ENCODE measurements at regions of chr6 and their contacts with region 1.

Region 1: DNA sequence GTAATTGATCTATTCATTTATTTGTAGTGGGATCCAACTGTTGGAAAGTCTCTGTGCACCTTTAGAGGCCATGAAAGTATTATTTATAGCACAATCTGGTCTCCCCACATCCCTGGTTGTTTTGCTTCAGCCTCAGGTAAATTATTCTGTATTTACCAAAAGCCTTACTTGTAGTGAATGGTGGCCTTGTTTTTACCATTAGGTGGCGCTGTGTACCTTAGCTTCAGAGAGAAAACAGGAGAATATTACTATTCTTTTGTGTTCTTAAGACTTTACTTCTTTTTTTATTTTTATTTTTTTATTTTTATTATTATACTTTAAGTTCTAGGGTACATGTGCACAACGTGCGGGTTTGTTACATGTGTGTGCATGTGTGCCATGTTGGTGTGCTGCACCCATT is 23.7 kb downstream of the PEX7 start:
- DNase-seq: peak; percentile 46
- H3K4me3 ChIP-seq: no peak overlapping the region
- H3K27ac ChIP-seq: no peak overlapping the region; a peak in 1 of 4 replicates
- H3K4me1 ChIP-seq: no peaks in the 10 kb centered on the region; a peak in 2 of 4 replicates
- H3K27me3 ChIP-seq: no peaks in the 10 kb centered on the region
- CTCF ChIP-seq: peak; percentile 71
- EP300 ChIP-seq: no peak
- RAD21 ChIP-seq: peak; percentile 79

Region 2: GRCh38 chr6:136761227-136761922 is 84.7 kb before region 1 on chr6:
- CTCF ChIA-PET with region 1: no interaction called
- POLR2A ChIA-PET with region 1: no interaction called
- DNase-seq: peak; percentile 39
- H3K4me3 ChIP-seq: peak overlapping the region in 1 of 2 experiments; percentile 18; a peak in 2 of 4 replicates
- H3K27ac ChIP-seq: peak overlapping the region; percentile 64 to 76
- H3K4me1 ChIP-seq: peaks cover 8 to 16% of the 10 kb centered on the region in 2 experiments; a peak in 3 of 4 replicates
- H3K27me3 ChIP-seq: no peaks in the 10 kb centered on the region
- CTCF ChIP-seq: no peak
- EP300 ChIP-seq: no peak
- RAD21 ChIP-seq: no peak

Region 3: DNA sequence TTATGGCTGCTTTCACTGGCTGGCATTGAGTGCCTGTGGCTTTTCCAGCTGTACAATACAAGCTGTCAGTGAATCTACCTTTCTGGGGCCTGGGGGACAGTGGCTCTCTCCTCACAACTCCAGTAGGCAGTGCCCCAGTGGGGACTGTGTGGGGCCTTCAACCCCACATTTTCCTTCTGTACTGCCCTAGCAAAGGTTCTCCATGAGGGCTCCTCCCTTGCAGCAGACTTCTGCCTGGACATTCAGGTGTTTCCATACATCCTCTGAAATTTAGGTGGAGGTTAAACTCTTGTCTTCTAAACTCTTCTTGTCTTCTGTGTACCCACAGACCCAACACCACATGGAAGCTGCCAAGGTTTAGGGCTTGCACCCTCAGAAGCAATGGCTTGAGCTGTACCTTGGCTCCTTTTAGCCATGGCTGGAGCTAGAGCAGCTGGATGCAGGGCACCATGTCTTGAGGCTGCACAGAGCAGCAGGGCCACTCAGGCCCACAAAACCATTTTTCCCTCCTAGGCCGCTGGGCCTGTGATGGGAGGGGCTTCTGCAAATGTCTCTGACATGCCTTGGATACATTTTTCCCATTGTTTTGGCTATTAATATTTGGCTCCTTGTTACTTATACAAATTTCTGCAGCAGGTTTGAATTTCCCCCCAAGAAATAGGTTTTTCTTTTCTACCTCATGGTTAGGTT is 14.0 kb before region 1 on chr6:
- CTCF ChIA-PET with region 1: interaction called, 12 read pairs
- POLR2A ChIA-PET with region 1: no interaction called
- DNase-seq: no peak
- H3K4me3 ChIP-seq: no peak overlapping the region; a peak in 1 of 4 replicates
- H3K27ac ChIP-seq: no peak overlapping the region
- H3K4me1 ChIP-seq: no peaks in the 10 kb centered on the region
- H3K27me3 ChIP-seq: no peaks in the 10 kb centered on the region
- CTCF ChIP-seq: no peak
- EP300 ChIP-seq: no peak
- RAD21 ChIP-seq: no peak

Region 4: GRCh38 chr6:136859430-136859829 is 13.4 kb after region 1 on chr6:
- CTCF ChIA-PET with region 1: interaction called, 10 read pairs
- POLR2A ChIA-PET with region 1: no interaction called
- DNase-seq: no peak
- H3K4me3 ChIP-seq: no peak overlapping the region
- H3K27ac ChIP-seq: no peak overlapping the region
- H3K4me1 ChIP-seq: peaks cover 0 to 2% of the 10 kb centered on the region in 2 experiments; a peak in 1 of 4 replicates
- H3K27me3 ChIP-seq: no peaks in the 10 kb centered on the region
- CTCF ChIP-seq: no peak
- EP300 ChIP-seq: no peak
- RAD21 ChIP-seq: no peak

Region 5: GRCh38 chr6:136889271-136890191 is 43.5 kb after region 1 on chr6:
- CTCF ChIA-PET with region 1: interaction called, 10 read pairs
- POLR2A ChIA-PET with region 1: no interaction called
- DNase-seq: no peak
- H3K4me3 ChIP-seq: no peak overlapping the region
- H3K27ac ChIP-seq: peak overlapping the region in 1 of 2 experiments; percentile 69; a peak in 2 of 4 replicates
- H3K4me1 ChIP-seq: peaks cover 6 to 14% of the 10 kb centered on the region in 2 experiments; a peak in 3 of 4 replicates
- H3K27me3 ChIP-seq: no peaks in the 10 kb centered on the region
- CTCF ChIP-seq: no peak
- EP300 ChIP-seq: no peak
- RAD21 ChIP-seq: no peak